MCF 10A (cell line): ENCODE measurements at regions of chr2 and their contacts with region 1.

Region 1: DNA sequence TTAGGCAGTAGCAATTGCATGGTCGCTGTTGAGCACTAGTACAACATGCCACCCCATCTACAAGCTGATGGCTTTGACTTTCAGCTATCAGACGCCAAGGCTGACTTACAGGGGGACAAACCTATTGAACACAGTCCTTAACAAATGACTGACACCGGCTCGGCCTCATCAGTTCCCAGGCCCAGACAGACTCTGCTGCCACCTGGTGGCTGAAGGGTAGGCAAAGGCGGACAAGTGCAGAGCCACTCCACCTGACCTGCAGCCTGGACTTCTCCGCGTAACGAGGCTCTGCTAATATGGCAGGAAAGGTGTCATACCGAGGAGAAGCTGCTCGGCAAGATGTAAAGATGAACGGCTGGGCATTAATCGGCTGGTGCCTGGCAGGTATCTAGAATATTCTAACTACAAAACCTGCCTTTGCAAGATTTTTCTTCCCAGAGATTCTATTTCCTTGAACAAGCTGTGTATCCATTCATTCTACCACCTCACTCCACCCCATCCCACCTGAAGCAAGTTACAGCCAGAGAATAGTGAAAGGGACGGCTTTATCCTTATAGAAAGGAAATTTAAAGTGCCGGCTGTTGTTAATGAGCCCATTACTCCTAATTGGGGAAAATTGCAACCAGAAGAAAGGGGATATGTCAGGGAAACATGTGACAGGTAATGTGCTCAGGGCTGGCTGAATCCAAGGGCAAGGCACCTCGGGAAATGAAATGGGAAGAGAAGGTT is 67.4 kb downstream of the STEAP3 start:
- DNase-seq: peak; percentile 74
- H3K4me3 Mint-ChIP-seq: no peak overlapping the region
- H3K27ac Mint-ChIP-seq: no peak overlapping the region
- H3K4me1 Mint-ChIP-seq: no peaks in the 10 kb centered on the region
- H3K27me3 Mint-ChIP-seq: no peaks in the 10 kb centered on the region
- CTCF ChIP-seq: peak; percentile 64

Region 2: DNA sequence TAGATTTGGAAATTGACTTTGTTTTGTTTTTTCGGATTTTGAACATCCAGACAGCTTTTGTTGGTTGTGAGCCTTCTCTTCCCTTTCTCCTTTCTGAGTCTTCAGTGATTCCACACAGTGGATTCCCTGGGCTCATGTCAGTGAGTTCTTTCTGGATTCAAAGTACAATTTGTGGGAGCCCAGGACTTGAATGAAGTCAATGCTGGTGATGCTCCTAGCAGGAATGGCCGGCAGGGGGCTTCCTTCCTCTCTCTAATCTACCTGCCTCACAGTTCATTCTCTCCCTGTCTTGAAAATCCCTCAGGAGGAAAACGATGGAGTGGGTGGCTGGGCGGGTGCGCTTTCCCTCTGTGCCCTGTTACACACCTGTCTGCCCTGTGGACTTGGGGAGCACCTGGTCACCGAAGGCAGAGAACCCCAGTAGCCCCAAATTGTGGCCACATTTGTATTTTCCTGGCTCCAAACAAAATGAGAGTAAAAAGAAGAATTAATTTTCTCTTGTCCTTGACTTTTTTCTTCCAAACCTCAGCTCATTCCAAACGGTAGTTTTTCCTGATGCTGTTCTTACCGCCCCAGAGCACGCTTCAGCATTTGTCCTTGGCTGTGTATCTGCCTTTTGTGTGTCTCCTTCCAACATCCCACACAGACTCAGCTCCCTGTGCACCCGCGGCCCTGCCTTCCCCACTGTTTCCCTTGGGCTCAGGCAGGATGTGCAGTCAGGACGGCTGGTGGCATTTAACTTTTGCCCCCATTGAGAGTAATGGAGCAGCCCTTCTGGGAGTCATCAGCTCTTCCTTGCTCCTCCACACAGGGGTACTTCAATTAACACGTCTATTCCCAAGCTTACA is 262.5 kb before region 1 on chr2:
- CTCF ChIA-PET with region 1: interaction called, 18 read pairs
- POLR2A ChIA-PET with region 1: no interaction called
- intact Hi-C with region 1: loop called (anchors 5 kb)
- DNase-seq: peak; percentile 65
- H3K4me3 Mint-ChIP-seq: no peak overlapping the region
- H3K27ac Mint-ChIP-seq: no peak overlapping the region
- H3K4me1 Mint-ChIP-seq: no peaks in the 10 kb centered on the region
- H3K27me3 Mint-ChIP-seq: peaks cover 48% of the 10 kb centered on the region
- CTCF ChIP-seq: peak; percentile 37

Region 3: GRCh38 chr2:119218478-119219064 is 72.5 kb before region 1 on chr2:
- CTCF ChIA-PET with region 1: interaction called, 19 read pairs
- POLR2A ChIA-PET with region 1: no interaction called
- intact Hi-C with region 1: loop called (anchors 1 kb)
- DNase-seq: peak; percentile 87
- H3K4me3 Mint-ChIP-seq: peak overlapping the region; percentile 21
- H3K27ac Mint-ChIP-seq: peak overlapping the region; percentile 91
- H3K4me1 Mint-ChIP-seq: peaks cover 33% of the 10 kb centered on the region
- H3K27me3 Mint-ChIP-seq: no peaks in the 10 kb centered on the region
- CTCF ChIP-seq: peak; percentile 54

Region 4: DNA sequence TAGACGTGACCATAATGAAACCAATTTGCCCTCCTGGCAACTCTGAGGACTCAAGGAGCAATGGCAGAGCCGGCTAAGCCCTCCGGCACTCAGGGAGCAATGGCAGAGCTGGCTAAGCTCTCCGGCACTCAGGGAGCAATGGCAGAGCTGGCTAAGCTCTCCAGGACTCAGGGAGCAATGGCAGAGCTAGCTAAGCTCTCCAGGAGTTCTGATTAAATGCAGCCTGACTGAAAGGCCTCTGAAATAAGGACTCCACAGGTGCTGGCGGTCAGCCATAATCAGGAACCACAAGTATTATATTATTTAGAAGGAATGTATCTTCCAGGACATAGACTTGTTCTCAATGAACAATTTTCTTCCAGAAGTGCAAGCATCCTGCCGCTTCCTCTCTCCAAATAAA is 10.4 kb after region 1 on chr2:
- CTCF ChIA-PET with region 1: interaction called, 12 read pairs
- POLR2A ChIA-PET with region 1: interaction called, 3 read pairs
- intact Hi-C with region 1: no loop called
- DNase-seq: no peak
- H3K4me3 Mint-ChIP-seq: no peak overlapping the region
- H3K27ac Mint-ChIP-seq: no peak overlapping the region
- H3K4me1 Mint-ChIP-seq: no peaks in the 10 kb centered on the region
- H3K27me3 Mint-ChIP-seq: no peaks in the 10 kb centered on the region
- CTCF ChIP-seq: no peak